ENCODE measurements at regions of chr1 and their contacts with region 1.

Region 1: GRCh38 chr1:24003331-24003972 is 23.3 kb upstream of the SRSF10 start:
- DNase-seq: no peak
- H3K4me3 Mint-ChIP-seq: no peak overlapping the region
- H3K27ac Mint-ChIP-seq: no peak overlapping the region
- H3K4me1 Mint-ChIP-seq: peaks cover 17% of the 10 kb centered on the region
- H3K27me3 Mint-ChIP-seq: no peaks in the 10 kb centered on the region
- CTCF ChIP-seq: no peak

Region 2: DNA sequence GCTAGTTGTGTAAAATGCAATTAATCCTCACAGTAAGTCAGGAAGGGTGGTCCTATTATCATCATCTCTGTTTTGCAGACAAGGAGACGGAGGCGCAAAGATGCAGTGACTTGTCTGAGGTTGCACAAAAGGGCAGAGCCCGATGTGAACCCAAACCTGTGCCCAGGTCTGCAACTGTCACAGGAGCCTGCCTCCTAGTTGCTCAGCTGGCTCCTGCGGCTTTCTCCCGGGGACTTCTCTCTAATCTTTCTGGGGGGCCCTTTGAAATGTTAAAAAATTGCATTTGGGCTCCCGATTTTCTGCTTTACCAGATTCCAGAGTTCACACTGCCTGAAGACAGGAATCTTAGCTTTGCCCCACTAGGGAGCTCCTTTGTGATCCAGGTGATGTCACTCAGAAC is 99.7 kb before region 1 on chr1:
- CTCF ChIA-PET with region 1: interaction called, 10 read pairs
- intact Hi-C with region 1: no loop called
- DNase-seq: no peak
- H3K4me3 Mint-ChIP-seq: no peak overlapping the region
- H3K27ac Mint-ChIP-seq: no peak overlapping the region
- H3K4me1 Mint-ChIP-seq: peaks cover 12% of the 10 kb centered on the region
- H3K27me3 Mint-ChIP-seq: peaks cover 47% of the 10 kb centered on the region
- CTCF ChIP-seq: no peak

Region 3: DNA sequence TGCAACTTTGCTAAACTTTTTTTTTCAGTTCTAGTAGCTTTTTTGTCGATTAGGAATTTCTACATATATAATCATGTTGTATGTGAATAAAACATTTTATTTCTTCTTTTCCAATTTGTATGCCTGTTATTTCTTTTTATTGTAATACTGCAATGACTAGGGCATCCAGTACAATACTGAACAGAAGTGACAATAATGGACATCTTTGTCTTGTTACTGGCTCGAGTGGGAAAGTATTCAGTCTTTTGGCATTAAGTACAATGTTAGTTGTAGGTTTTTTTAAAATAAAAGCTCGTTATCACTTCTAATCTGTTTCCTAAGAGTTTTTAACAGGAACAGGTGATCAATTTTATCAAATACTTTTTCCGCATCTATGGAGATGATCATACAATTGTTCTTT is 400.4 kb after region 1 on chr1:
- CTCF ChIA-PET with region 1: no interaction called
- intact Hi-C with region 1: no loop called
- DNase-seq: no peak
- H3K4me3 Mint-ChIP-seq: no peak overlapping the region
- H3K27ac Mint-ChIP-seq: no peak overlapping the region
- H3K4me1 Mint-ChIP-seq: no peaks in the 10 kb centered on the region
- H3K27me3 Mint-ChIP-seq: no peaks in the 10 kb centered on the region
- CTCF ChIP-seq: no peak

Measured in Calu3 (cell line).